RWPE1 (cell line): ENCODE measurements at regions of chr1 and their contacts with region 1.

Region 1: GRCh38 chr1:155250633-155251449 is 4.4 kb downstream of the ENTREP3 start:
- DNase-seq: peak; percentile 94
- H3K27ac ChIP-seq: peak overlapping the region; percentile 63
- CTCF ChIP-seq: peak; percentile 98

Region 2: GRCh38 chr1:155227261-155228095 is 23.4 kb before region 1 on chr1:
- CTCF ChIA-PET with region 1: interaction called, 13 read pairs
- POLR2A ChIA-PET with region 1: no interaction called
- DNase-seq: peak; percentile 100
- H3K27ac ChIP-seq: peak overlapping the region; percentile 90
- CTCF ChIP-seq: no peak

Region 3: DNA sequence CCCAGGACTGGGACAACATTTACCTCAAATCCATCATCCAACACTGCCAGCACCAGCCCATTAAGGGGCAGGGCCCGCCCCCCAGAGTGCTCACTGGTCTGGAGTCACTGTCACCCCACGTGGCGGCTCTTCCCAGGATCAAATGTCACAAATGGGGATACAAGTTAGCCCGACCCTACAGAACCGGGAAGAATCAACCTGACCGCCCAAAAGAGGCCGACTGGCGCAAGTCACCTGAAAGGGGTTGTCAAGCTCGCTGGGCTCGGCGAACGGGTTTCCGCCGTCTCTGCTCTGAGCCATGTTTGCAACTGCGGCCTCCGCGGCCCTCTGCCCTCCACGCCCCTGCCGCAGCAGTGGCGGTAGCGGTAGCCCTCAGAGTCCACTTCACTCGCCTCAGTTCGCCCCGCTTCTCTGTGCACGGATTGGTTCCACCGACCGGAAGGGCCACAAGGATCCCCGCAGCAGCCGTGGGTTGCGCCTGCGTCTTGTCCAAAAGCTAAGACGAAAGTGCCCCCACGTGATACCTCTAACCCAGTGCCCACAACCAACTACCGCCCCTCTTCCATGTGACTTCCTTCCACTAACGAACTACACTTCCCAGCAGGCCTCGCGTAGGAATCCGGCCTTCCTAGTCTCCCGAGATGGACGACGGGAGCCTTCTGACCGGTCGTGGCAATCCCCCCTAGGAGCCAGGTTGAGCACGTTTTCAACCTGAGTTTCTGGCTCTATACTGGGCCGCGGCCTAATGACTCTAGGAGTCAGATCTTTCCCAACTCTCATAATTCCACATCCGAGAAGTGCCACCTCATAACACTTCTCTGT is 11.2 kb after region 1 on chr1 and contains the start of gene SCAMP3:
- CTCF ChIA-PET with region 1: interaction called, 14 read pairs
- POLR2A ChIA-PET with region 1: interaction called, 3 read pairs
- DNase-seq: peak; percentile 99
- H3K27ac ChIP-seq: peak within 1 kb of the TSS; percentile 85
- CTCF ChIP-seq: no peak

Region 4: GRCh38 chr1:155267373-155267772 is 16.5 kb after region 1 on chr1:
- CTCF ChIA-PET with region 1: interaction called, 14 read pairs
- POLR2A ChIA-PET with region 1: no interaction called
- DNase-seq: no peak
- H3K27ac ChIP-seq: no peak overlapping the region
- CTCF ChIP-seq: no peak

Region 5: GRCh38 chr1:155323798-155324610 is 73.2 kb after region 1 on chr1:
- CTCF ChIA-PET with region 1: interaction called, 34 read pairs
- POLR2A ChIA-PET with region 1: no interaction called
- DNase-seq: peak; percentile 97
- H3K27ac ChIP-seq: peak overlapping the region; percentile 98
- CTCF ChIP-seq: no peak

Region 6: GRCh38 chr1:155392898-155393411 is 142.1 kb after region 1 on chr1:
- CTCF ChIA-PET with region 1: no interaction called
- POLR2A ChIA-PET with region 1: no interaction called
- DNase-seq: no peak
- H3K27ac ChIP-seq: no peak overlapping the region
- CTCF ChIP-seq: no peak